Cardiac septum (tissue), 1 donor: ENCODE measurements at regions of chr13 and their contacts with region 1.

Region 1: DNA sequence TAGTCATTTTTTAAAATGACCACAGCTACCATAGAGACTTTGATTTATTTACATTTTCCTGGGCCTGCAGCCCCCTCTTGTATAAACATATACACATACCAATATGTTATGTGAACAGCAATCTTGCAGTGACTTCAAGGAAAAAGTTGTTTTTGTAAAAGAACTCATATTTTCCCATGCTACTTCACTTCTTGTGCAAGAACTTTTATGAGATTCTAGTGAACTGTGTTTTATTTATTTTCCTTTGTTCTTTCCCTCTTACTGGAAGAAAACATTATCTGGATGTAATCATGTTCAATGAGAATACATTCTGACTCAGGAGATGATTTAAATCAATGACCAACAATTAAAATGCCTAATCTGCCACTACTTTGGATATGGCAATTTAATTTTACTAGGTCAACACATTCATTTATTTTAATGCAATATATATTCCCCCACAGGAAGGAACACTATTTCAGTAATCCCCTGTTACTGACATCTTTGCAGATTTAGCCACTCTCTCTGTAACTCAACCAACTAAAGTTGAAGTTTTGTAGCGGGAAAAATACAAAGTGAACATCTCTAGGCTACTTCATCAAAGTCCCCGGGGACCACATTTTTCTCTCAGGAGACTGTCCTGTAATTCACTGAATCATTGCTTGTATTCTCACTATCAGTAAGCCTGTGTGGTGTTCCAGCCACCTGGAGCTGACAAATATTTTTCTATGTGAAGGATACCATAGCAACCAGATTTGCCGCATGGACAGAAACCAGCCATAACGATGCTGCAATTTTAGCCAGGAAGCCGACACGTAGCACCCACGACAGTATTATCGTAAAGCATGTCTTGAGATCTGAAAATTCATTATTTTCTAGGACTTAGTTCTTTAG is 90.5 kb downstream of the STARD13 start:
- DNase-seq: no peak

Region 2: GRCh38 chr13:33153421-33154404 is 41.3 kb before region 1 on chr13:
- intact Hi-C with region 1: loop called (anchors 5 kb)
- DNase-seq: no peak